B cell (primary cell): ENCODE measurements at regions of chr2 and their contacts with region 1.

Region 1: DNA sequence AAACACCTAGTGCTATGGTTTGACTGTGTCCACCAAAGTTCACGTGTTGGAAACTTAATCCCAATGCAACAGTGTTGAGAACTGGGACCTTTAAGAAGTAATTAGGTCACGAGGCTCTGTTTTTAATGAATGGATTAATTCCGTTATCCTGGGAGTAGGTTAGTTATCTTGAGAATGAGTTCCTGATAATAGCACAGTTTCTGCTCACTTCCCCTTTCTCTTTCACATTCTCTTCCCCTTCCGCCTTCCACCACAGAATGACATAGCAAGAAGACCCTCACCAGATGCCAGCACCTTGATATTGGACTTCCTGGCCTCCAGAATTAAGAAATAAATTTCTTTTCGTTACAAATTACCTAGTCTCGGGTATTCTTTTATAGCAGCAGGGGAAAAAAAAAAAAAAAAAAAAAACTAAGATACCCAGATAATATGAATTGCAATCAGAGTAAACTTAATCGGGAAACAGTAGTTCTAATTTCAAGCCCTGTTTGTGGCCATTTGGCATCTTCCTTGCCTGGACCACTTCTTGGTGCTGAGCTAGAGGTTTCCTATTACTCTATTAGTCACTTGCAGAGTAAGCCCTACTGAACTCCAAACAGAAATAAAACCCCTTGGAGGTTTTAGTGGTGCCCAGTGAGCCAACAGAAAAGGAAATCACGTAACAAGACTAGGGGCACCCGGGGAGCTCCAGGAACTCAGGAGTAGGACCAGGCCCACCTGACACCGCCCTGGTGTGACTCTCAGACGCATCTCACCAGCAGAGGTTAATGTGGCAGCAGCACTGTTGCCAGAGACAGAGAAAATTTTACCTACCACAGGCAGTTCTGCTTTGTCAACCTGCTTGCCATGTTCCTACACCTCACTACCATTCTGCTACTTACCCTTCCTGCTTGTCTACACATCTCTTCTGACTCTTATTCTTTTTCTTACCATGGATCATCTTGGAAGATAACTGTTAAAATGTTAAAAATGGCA is 147.6 kb upstream of the CAB39 start:
- DNase-seq: peak; percentile 81
- ATAC-seq: peak; percentile 86
- H3K4me3 ChIP-seq: peak overlapping the region in 3 of 5 experiments; percentile 19 to 48 (median 34)
- H3K4me3 Mint-ChIP-seq: peak overlapping the region; percentile 52
- H3K27ac ChIP-seq: peak overlapping the region; percentile 63 to 65
- H3K27ac Mint-ChIP-seq: peak overlapping the region; percentile 57
- H3K4me1 ChIP-seq: peaks cover 14 to 23% of the 10 kb centered on the region in 2 donors
- H3K4me1 Mint-ChIP-seq: peaks cover 25% of the 10 kb centered on the region
- H3K27me3 ChIP-seq: no peaks in the 10 kb centered on the region
- H3K27me3 Mint-ChIP-seq: no peaks in the 10 kb centered on the region
- CTCF ChIP-seq: no peak

Region 2: DNA sequence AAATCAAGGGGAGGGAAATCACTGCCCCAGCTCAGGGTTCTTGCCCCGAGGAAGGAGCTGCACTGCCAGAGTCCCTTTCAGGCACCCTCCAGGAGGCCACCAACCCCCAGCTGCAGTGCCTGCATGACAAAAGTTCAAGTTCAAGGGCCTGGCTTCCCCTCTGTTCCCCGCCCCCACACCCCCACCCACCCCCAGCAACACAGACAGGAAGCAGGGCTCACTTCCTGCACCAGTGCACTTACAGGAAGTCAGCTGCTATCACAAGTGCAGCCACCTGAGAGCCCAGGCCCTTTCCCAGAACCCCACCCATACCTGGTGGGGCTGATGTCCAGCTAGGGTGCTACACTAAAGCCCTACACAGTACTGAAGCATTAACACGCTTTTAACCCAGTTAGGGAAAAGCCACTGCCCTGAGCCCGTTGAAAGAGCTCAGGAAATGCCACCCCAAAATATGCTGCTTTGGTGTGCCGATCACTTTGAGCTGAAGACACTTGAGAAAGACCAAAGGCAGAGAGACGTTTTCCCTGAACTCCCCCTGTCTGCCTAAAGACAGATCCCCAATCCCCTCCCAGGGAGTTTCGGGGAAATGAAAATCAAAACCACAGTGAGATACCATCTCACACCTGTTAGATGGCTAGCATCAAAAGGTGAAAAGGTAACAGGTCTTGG is 37.6 kb after region 1 on chr2:
- CTCF ChIA-PET with region 1: no interaction called
- POLR2A ChIA-PET with region 1: no interaction called
- intact Hi-C with region 1: loop called (anchors 5 kb)
- DNase-seq: peak; percentile 83
- ATAC-seq: peak; percentile 84
- H3K4me3 ChIP-seq: peak overlapping the region in 3 of 5 experiments; percentile 9 to 31 (median 19)
- H3K4me3 Mint-ChIP-seq: peak overlapping the region; percentile 78
- H3K27ac ChIP-seq: peak overlapping the region; percentile 99
- H3K27ac Mint-ChIP-seq: peak overlapping the region; percentile 99
- H3K4me1 ChIP-seq: peaks cover 72% of the 10 kb centered on the region in 2 donors
- H3K4me1 Mint-ChIP-seq: peaks cover 83% of the 10 kb centered on the region
- H3K27me3 ChIP-seq: no peaks in the 10 kb centered on the region
- H3K27me3 Mint-ChIP-seq: no peaks in the 10 kb centered on the region
- CTCF ChIP-seq: no peak

Region 3: DNA sequence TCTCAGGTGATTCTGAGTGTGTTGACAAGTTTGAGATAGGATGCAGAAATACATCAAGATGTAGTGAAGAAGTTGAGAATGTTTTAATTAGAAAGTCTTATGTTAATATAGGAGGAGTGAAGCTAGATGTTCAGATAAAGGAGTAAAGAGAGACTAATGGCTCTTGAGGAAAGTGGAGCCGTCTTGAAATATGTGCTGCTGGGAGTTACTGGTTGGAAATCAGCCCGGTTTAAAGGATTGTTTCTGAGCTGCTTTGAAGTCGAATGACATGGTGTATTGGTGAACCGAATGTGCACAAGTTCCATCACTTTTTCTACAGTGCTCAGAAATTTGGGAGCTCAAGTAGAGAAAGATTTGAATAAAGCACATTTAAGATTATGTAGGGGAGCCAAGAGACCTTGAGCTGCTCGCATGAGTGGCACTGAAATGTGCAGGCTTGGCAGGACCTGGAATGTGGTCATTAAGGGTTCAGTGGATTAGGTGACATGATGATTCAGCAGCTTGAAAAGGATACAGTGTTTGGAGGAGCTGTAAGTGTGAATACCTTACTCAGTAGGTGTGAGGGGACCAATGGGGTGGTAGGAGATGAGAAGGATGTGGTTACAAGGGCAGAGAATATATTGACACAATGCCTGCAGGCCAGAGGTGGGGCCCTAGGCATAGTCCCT is 216.2 kb after region 1 on chr2:
- CTCF ChIA-PET with region 1: no interaction called
- POLR2A ChIA-PET with region 1: no interaction called
- intact Hi-C with region 1: no loop called
- DNase-seq: no peak
- ATAC-seq: no peak
- H3K4me3 ChIP-seq: no peak overlapping the region
- H3K4me3 Mint-ChIP-seq: no peak overlapping the region
- H3K27ac ChIP-seq: no peak overlapping the region
- H3K27ac Mint-ChIP-seq: peak overlapping the region; percentile 4
- H3K4me1 ChIP-seq: peaks cover 0 to 12% of the 10 kb centered on the region in 2 donors
- H3K4me1 Mint-ChIP-seq: peaks cover 49% of the 10 kb centered on the region
- H3K27me3 ChIP-seq: no peaks in the 10 kb centered on the region
- H3K27me3 Mint-ChIP-seq: no peaks in the 10 kb centered on the region
- CTCF ChIP-seq: no peak

Region 4: DNA sequence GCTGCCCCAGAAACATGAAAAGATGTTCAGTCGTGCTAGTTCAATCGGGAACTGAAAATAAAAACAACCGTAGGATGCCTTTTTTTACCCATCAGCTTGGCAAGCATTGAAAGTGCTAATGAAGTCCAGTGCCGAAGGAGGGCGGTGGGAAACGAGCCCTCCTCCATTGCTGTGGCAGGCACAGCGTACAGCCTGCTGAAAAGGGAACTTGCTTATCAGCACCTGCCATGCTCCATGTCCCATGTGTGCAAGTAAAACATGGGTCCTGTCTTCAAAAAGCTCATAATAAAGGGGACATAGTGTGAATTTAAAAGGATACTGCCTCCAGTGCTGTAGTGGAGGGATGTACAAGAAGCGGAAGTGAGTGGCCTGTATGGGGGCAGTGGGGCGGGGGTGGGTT is 715.8 kb after region 1 on chr2:
- CTCF ChIA-PET with region 1: no interaction called
- POLR2A ChIA-PET with region 1: no interaction called
- intact Hi-C with region 1: no loop called
- DNase-seq: peak; percentile 28
- ATAC-seq: peak; percentile 21
- H3K4me3 ChIP-seq: no peak overlapping the region
- H3K4me3 Mint-ChIP-seq: peak overlapping the region; percentile 20
- H3K27ac ChIP-seq: no peak overlapping the region
- H3K27ac Mint-ChIP-seq: no peak overlapping the region
- H3K4me1 ChIP-seq: peaks cover 6 to 8% of the 10 kb centered on the region in 2 donors
- H3K4me1 Mint-ChIP-seq: peaks cover 12% of the 10 kb centered on the region
- H3K27me3 ChIP-seq: no peaks in the 10 kb centered on the region
- H3K27me3 Mint-ChIP-seq: peaks cover 3% of the 10 kb centered on the region
- CTCF ChIP-seq: no peak